Activated T-helper 1 cell treated with anti-CD3 and anti-CD28 coated beads, Interleukin-12 subunit alpha, Interleukin-12 subunit beta, Interleukin-2, Interleukin-4 antibody, amounts not matched to agents 30 ng/mL and 10 ng/mL and 1 ng/mL, durations not matched to agents 14 hours and 24 hours and 36 hours (primary cell): ENCODE measurements at regions of chr12 and their contacts with region 1.

Region 1: GRCh38 chr12:42237052-42237852 is 796 bp downstream of the YAF2 start:
- DNase-seq: peak; percentile 68
- H3K4me3 Mint-ChIP-seq: peak overlapping the region; percentile 87
- H3K27ac Mint-ChIP-seq: peak overlapping the region; percentile 83
- H3K4me1 Mint-ChIP-seq: peaks cover 46% of the 10 kb centered on the region
- H3K27me3 Mint-ChIP-seq: no peaks in the 10 kb centered on the region

Region 2: GRCh38 chr12:42299392-42300308 is 62.4 kb after region 1 on chr12:
- intact Hi-C with region 1: loop called (anchors 1 kb)
- DNase-seq: peak; percentile 31
- H3K4me3 Mint-ChIP-seq: no peak overlapping the region
- H3K27ac Mint-ChIP-seq: peak overlapping the region; percentile 54
- H3K4me1 Mint-ChIP-seq: peaks cover 13% of the 10 kb centered on the region
- H3K27me3 Mint-ChIP-seq: no peaks in the 10 kb centered on the region